Lower leg skin (tissue), 4 donors: ENCODE measurements at regions of chr10 and their contacts with region 1.

Region 1: DNA sequence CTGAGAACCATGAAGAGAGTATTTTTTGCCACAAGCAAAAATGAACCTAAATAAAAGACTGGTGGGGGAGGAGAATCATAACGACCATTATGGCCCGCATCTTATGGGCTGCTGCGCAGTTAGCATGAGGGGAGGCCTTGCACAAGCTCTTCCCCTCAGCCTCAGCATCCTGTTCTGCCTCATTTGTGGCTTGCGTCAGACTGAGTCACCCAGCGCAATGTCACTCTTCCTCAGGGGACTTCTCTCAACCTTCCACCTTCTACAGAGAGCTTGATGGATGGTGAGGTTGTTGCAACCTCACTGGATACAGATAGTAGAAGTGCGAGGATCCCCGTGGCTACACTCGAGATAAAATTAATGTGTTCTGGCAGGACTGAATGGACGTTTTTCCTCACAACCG is 16.8 kb upstream of the GPR15LG start:
- DNase-seq: no peak
- H3K4me3 ChIP-seq: no peak overlapping the region
- CTCF ChIP-seq: no peak
- POLR2A ChIP-seq: no peak

Region 2: GRCh38 chr10:84204122-84204521 is 47.4 kb after region 1 on chr10:
- intact Hi-C with region 1: loop called (anchors 5 kb)
- DNase-seq: no peak
- H3K4me3 ChIP-seq: no peak overlapping the region
- CTCF ChIP-seq: no peak
- POLR2A ChIP-seq: no peak